K562 (cell line): ENCODE measurements at regions of chr4 and their contacts with region 1.

Region 1: GRCh38 chr4:170259631-170260153 is 169.9 kb upstream of the AADAT start:
- DNase-seq: peak; percentile 40 to 76 (median 58)
- ATAC-seq: peak; percentile 96
- H3K4me3 ChIP-seq: no peak overlapping the region
- H3K27ac ChIP-seq: no peak overlapping the region
- H3K4me1 ChIP-seq: no peaks in the 10 kb centered on the region
- H3K27me3 ChIP-seq: no peaks in the 10 kb centered on the region
- CTCF ChIP-seq: peak; percentile 74 to 83 (median 82)
- EP300 ChIP-seq: no peak
- POLR2A ChIP-seq: no peak
- RAD21 ChIP-seq: peak; percentile 66 to 67

Region 2: GRCh38 chr4:170138580-170139194 is 121.0 kb before region 1 on chr4:
- CTCF ChIA-PET with region 1: no interaction called
- POLR2A ChIA-PET with region 1: no interaction called
- in situ Hi-C with region 1: no loop called
- intact Hi-C with region 1: loop called (anchors 1 kb)
- DNase-seq: peak; percentile 66 to 78 (median 68)
- ATAC-seq: peak; percentile 96
- H3K4me3 ChIP-seq: no peak overlapping the region
- H3K27ac ChIP-seq: no peak overlapping the region
- H3K4me1 ChIP-seq: no peaks in the 10 kb centered on the region
- H3K27me3 ChIP-seq: no peaks in the 10 kb centered on the region
- CTCF ChIP-seq: peak; percentile 69 to 79 (median 74)
- EP300 ChIP-seq: no peak
- POLR2A ChIP-seq: no peak
- RAD21 ChIP-seq: peak; percentile 39 to 72; a peak in 2 of 4 replicates

Region 3: GRCh38 chr4:170853422-170854021 is 593.8 kb after region 1 on chr4:
- CTCF ChIA-PET with region 1: no interaction called
- POLR2A ChIA-PET with region 1: no interaction called
- in situ Hi-C with region 1: no loop called
- intact Hi-C with region 1: loop called (anchors 10 kb)
- DNase-seq: peak; percentile 6 to 35 (median 16)
- ATAC-seq: no peak
- H3K4me3 ChIP-seq: no peak overlapping the region
- H3K27ac ChIP-seq: no peak overlapping the region
- H3K4me1 ChIP-seq: no peaks in the 10 kb centered on the region
- H3K27me3 ChIP-seq: no peaks in the 10 kb centered on the region
- CTCF ChIP-seq: peak in 2 of 3 experiments; percentile 43 to 58; a peak in 3 of 6 replicates
- EP300 ChIP-seq: no peak
- POLR2A ChIP-seq: no peak
- RAD21 ChIP-seq: 0 out of 4 replicates have a peak, but pooled peaks of 1 of the 2 experiments have one; percentile 16